HEK293 (cell line): ENCODE measurements at regions of chr20 and their contacts with region 1.

Region 1: DNA sequence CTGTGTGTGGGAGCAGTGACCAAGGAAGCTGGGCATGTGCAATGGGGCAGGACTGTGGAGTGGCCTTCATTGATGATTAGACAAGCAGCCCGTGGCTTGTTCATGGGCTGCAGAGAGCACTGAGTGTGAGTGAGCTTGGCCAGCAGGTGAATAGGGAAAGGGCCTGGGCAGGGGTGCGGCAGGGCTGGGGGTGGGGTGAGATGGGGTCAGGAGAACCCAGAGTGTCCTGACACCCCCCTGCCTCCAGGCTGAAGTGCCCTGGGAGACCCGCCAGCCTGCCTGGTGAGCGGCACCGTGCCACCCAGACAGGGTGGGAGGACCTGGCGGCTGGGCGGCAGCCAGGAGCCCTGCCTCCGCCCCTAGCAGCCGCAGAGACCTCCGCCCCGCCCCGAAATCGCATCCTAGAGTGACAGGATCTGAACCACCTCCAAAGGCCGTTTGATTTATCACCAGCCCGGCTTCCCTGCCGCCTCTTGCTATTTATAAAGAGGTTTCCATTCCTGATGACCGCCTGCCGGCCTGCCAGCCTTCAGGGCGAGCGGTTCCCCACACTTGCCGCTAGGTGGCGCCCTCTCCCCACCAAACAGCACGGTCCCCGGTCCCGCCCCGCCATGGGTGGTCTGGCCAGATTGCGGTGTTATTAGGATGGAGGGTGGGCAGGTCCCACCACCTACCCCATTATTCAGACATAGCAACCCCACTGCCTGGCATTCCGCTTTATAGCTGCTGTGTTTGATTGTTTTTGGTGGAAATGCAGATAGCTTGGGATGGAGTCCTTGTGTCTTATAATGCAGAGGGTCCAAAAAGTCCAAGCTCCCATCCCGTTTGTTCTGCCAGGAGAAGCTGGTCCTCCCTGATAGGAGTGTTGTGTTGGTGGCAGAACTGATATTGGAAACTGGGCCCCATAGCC is 3.5 kb downstream of the MYLK2 start:
- H3K4me3 ChIP-seq: no peak overlapping the region
- H3K27ac ChIP-seq: no peak overlapping the region
- H3K4me1 ChIP-seq: no peaks in the 10 kb centered on the region
- CTCF ChIP-seq: peak; percentile 94

Region 2: DNA sequence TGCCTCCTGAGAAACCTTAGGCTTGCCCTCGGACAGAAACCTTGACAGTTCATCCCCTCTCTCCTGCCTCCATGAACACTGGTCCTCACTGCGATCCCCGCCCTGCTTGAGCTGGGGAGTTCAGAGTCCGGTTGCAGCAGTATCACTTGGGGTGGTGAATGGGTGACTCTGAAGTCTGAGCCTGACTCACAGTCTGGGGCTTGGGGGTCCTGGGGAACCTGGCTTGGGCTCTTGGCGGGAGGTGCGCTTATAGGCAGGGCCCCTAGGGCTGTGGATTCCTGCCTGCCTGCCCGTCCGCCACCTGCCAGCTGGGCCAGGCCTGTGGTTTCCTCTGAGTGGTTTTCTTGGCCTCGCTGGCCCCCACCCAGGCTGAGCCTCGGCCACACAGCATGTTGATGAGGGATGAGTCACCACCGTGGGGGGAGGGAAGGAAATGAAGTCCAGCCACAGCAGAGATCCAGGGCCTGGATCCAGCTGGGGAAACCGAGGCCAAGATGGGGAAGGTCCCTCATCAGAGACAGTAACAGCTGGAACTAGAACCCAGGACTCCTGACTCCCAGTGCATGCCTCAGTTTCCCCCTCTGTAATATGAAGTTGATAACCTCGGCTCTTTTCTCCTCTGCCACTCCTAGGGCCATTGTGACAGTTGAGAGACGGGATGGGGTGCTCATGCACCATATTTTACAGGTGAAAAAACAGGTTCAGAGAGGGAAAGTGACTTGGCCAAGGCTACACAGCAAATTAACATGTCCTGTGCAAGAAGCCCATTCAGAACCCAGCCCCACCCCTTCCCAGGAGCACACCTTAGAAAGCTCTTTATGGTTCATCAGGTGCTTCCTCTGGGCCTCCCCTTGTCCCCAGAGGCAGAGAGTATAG is 13.5 kb after region 1 on chr20:
- CTCF ChIA-PET with region 1: interaction called, 71 read pairs
- POLR2A ChIA-PET with region 1: interaction called, 7 read pairs
- H3K4me3 ChIP-seq: no peak overlapping the region
- H3K27ac ChIP-seq: no peak overlapping the region
- H3K4me1 ChIP-seq: no peaks in the 10 kb centered on the region
- CTCF ChIP-seq: no peak

Region 3: GRCh38 chr20:31851240-31851955 is 28.7 kb after region 1 on chr20:
- CTCF ChIA-PET with region 1: interaction called, 54 read pairs
- POLR2A ChIA-PET with region 1: no interaction called
- H3K4me3 ChIP-seq: no peak overlapping the region
- H3K27ac ChIP-seq: no peak overlapping the region
- H3K4me1 ChIP-seq: no peaks in the 10 kb centered on the region
- CTCF ChIP-seq: no peak

Region 4: DNA sequence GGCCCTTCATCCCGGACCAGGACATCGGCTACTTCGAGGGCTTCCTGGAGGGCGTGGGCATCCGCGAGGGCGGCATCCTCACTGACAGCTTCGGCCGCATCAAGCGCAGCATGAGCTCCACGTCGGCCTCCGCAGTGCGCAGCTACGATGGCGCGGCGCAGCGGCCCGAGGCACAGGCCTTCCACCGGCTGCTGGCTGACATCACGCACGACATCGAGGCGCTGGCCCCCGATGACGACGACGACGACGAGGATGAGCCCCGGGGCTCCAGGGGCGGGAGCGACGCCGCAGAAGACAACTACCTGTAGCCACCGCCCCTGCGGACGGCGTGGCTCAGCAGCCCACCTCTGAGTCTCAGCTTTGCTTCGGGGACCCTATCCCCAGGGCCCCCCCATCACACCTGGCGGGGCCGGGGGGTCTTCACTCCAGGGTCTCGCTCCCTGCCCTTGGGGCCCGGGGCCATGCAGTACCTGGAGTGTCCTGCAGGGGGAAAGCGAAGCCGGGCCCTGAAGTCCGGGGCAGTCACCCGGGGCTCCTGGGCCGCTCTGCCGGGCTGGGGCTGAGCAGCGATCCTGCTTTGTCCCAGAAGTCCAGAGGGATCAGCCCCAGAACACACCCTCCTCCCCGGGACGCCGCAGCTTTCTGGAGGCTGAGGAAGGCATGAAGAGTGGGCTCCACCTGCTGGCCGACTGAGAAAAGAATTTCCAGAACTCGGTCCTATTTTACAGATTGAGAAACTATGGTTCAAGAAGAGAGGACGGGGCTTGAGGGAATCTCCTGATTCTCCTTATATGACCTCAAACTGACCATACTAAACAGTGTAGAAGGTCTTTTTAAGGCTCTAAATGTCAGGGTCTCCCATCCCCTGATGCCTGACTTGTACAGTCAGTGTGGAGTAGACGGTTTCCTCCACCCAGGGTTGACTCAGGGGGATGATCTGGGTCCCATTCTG is 208.6 kb after region 1 on chr20:
- CTCF ChIA-PET with region 1: interaction called, 24 read pairs
- POLR2A ChIA-PET with region 1: no interaction called
- H3K4me3 ChIP-seq: no peak overlapping the region; the same call in 1 of the 2 replicates
- H3K27ac ChIP-seq: no peak overlapping the region
- H3K4me1 ChIP-seq: no peaks in the 10 kb centered on the region
- CTCF ChIP-seq: peak; percentile 88; the same call in 1 of the 2 replicates